Mammary epithelial cell (primary cell): ENCODE measurements at regions of chr1 and their contacts with region 1.

Region 1: DNA sequence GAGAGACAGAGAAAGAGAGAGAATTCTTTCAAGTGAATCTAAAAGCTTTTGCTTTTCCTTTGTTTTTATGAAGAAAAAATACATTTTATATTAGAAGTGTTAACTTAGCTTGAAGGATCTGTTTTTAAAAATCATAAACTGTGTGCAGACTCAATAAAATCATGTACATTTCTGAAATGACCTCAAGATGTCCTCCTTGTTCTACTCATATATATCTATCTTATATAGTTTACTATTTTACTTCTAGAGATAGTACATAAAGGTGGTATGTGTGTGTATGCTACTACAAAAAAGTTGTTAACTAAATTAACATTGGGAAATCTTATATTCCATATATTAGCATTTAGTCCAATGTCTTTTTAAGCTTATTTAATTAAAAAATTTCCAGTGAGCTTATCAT is 117.6 kb downstream of the PTPRC start:
- DNase-seq: no peak
- H3K4me3 ChIP-seq: no peak overlapping the region
- H3K27ac ChIP-seq: no peak overlapping the region
- H3K4me1 ChIP-seq: no peaks in the 10 kb centered on the region
- H3K27me3 ChIP-seq: no peaks in the 10 kb centered on the region
- CTCF ChIP-seq: peak in 1 of 2 donors; percentile 27

Region 2: GRCh38 chr1:198132060-198132781 is 624.2 kb before region 1 on chr1:
- CTCF ChIA-PET with region 1: no interaction called
- dilution Hi-C with region 1: no loop called
- in situ Hi-C with region 1: no loop called
- intact Hi-C with region 1: no loop called
- DNase-seq: no peak
- H3K4me3 ChIP-seq: no peak overlapping the region
- H3K27ac ChIP-seq: no peak overlapping the region
- H3K4me1 ChIP-seq: no peaks in the 10 kb centered on the region
- H3K27me3 ChIP-seq: no peaks in the 10 kb centered on the region
- CTCF ChIP-seq: no peak

Region 3: DNA sequence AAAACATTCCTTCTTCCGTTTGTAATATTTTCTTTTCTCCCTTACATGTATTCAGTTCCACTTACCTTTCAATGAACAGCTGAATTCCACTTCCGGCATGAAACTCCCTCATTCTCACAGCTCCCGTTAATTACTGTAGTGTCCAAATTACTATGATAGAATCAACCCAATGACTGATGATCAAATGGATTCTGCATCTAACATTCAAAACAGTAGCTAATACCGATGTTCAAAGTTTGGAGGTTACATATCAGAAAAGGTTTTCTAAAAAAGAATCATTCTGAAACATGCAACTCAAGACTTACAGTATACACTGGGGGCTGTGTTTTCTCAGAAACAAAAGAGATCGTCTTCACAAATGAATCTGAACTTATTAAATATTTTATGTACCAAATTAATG is 40.4 kb before region 1 on chr1:
- CTCF ChIA-PET with region 1: no interaction called
- dilution Hi-C with region 1: no loop called
- in situ Hi-C with region 1: no loop called
- intact Hi-C with region 1: no loop called
- DNase-seq: no peak
- H3K4me3 ChIP-seq: no peak overlapping the region
- H3K27ac ChIP-seq: no peak overlapping the region
- H3K4me1 ChIP-seq: no peaks in the 10 kb centered on the region
- H3K27me3 ChIP-seq: no peaks in the 10 kb centered on the region
- CTCF ChIP-seq: no peak

Region 4: DNA sequence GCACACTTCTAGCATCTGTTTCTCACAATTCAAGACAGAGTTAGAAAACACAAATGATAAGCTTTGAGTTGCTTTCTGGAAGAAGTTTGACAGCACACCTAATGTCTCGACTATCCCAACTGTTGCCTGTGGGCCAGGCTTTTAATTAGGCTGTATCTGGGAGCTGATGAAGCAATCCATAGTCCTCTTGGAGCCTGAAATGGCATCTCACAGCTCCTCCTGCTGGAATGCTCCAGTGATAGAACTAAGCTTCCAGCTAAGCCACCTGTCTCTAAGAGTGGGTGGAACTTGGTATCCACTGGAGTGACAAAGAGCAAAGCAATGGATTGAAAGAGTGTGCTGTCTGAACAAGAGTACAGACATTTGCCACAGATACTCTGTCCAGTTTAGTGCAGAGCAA is 665.7 kb after region 1 on chr1:
- CTCF ChIA-PET with region 1: no interaction called
- dilution Hi-C with region 1: no loop called
- in situ Hi-C with region 1: no loop called
- intact Hi-C with region 1: loop called (anchors 1 kb)
- DNase-seq: peak; percentile 45
- H3K4me3 ChIP-seq: no peak overlapping the region
- H3K27ac ChIP-seq: no peak overlapping the region
- H3K4me1 ChIP-seq: no peaks in the 10 kb centered on the region
- H3K27me3 ChIP-seq: no peaks in the 10 kb centered on the region
- CTCF ChIP-seq: peak; percentile 44 to 69

Region 5: GRCh38 chr1:199463521-199464128 is 707.2 kb after region 1 on chr1:
- CTCF ChIA-PET with region 1: no interaction called
- dilution Hi-C with region 1: no loop called
- in situ Hi-C with region 1: loop called (anchors 25 kb)
- intact Hi-C with region 1: loop called (anchors 1 kb)
- DNase-seq: peak; percentile 45
- H3K4me3 ChIP-seq: no peak overlapping the region
- H3K27ac ChIP-seq: no peak overlapping the region
- H3K4me1 ChIP-seq: no peaks in the 10 kb centered on the region
- H3K27me3 ChIP-seq: peaks cover 3% of the 10 kb centered on the region
- CTCF ChIP-seq: peak; percentile 78 to 80

Region 6: GRCh38 chr1:199551967-199552565 is 795.6 kb after region 1 on chr1:
- CTCF ChIA-PET with region 1: no interaction called
- dilution Hi-C with region 1: no loop called
- in situ Hi-C with region 1: no loop called
- intact Hi-C with region 1: loop called (anchors 2 kb)
- DNase-seq: peak; percentile 32
- H3K4me3 ChIP-seq: no peak overlapping the region
- H3K27ac ChIP-seq: no peak overlapping the region
- H3K4me1 ChIP-seq: no peaks in the 10 kb centered on the region
- H3K27me3 ChIP-seq: peaks cover 6% of the 10 kb centered on the region
- CTCF ChIP-seq: peak; percentile 83 to 84

Region 7: DNA sequence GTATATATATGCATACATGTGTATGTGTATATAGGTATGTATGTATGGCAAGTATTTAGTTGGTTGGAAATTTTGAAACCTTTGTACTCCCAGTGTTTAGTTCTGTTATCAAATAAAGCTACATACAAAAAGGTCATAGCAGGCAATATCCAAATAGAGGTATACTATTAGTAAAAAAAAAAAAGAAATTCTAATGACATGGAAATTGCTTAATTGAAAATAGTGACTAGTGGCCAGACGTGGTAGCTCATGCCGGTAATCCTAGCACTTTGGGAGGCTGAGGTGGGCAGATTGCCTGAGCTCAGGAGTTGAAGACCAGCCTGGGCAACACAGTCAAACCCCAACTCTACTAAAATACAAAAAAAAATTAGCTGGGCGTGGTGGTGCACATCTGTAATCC is 919.5 kb after region 1 on chr1:
- CTCF ChIA-PET with region 1: no interaction called
- dilution Hi-C with region 1: no loop called
- in situ Hi-C with region 1: no loop called
- intact Hi-C with region 1: loop called (anchors 10 kb)
- DNase-seq: no peak
- H3K4me3 ChIP-seq: no peak overlapping the region
- H3K27ac ChIP-seq: no peak overlapping the region
- H3K4me1 ChIP-seq: no peaks in the 10 kb centered on the region
- H3K27me3 ChIP-seq: peaks cover 2% of the 10 kb centered on the region
- CTCF ChIP-seq: peak in 1 of 2 donors; percentile 1